ENCODE measurements at regions of chr2 and their contacts with region 1.

Region 1: GRCh38 chr2:16635791-16636699 is 29.6 kb downstream of the CYRIA start:
- DNase-seq: peak; percentile 66
- H3K4me3 ChIP-seq: no peak overlapping the region; a peak in 1 of 4 replicates
- H3K27ac ChIP-seq: no peak overlapping the region
- H3K4me1 ChIP-seq: peaks cover 13 to 25% of the 10 kb centered on the region in 2 experiments; a peak in 2 of 4 replicates
- H3K27me3 ChIP-seq: no peaks in the 10 kb centered on the region
- CTCF ChIP-seq: no peak
- EP300 ChIP-seq: no peak
- RAD21 ChIP-seq: no peak

Region 2: DNA sequence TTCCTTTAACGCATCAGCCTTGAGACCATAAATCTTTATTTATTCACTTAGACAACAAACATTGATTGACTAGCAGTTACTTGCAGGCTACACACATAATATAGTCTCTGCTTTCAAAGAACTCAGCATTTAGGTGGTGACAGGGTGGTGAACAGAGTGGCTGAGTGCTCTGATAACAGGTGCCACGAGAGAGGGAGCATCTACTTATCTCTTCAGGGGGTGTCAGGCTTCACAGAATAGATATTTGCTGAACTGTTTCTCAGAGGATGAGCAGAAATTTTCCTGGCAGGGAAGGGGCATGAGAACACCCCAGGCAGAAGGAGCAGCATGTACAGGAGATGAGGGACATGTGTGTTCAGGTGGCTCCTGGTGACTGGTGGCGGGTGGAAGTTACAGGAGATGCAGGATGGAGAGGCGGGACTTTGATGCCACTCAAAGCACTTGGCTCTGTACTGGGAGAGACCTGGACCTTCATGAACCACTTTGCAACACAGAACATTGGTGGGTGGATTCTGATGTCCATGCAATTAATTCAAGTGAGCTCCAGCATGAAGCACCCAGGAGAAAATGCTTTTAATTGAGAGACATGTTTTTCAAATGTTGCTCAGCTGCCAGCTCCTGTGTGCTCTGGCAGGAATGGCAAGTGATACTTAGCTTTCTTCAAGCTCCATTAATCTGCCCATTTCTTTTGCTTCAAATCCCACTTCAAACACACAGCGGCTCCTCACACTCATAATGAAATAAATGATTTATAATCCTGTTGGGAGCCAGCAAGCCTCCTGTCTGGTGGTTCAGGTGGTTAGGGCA is 446.8 kb before region 1 on chr2:
- CTCF ChIA-PET with region 1: no interaction called
- POLR2A ChIA-PET with region 1: no interaction called
- DNase-seq: no peak
- H3K4me3 ChIP-seq: no peak overlapping the region
- H3K27ac ChIP-seq: no peak overlapping the region
- H3K4me1 ChIP-seq: peaks cover 0 to 30% of the 10 kb centered on the region in 2 experiments; a peak in 1 of 4 replicates
- H3K27me3 ChIP-seq: no peaks in the 10 kb centered on the region
- CTCF ChIP-seq: no peak
- EP300 ChIP-seq: no peak
- RAD21 ChIP-seq: no peak

Region 3: DNA sequence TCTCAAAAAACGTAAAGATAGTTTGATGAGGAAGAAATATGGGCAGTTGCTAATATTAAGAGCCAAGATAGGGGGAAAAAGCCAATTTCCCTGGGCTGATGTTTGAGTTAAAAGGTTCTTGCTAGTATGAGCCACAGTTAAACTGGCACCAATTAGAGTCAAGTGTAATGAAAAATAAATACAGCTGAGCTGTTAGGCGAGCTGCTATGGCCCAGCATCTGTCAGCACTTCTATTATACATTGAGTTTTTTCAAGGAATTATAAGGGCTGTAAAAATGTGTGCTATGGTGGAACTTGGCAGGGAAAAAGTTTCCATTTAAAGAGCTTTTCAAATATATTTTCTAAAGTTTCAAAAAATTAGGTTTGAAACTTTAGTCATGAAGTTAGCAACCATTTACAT is 250.0 kb before region 1 on chr2:
- CTCF ChIA-PET with region 1: no interaction called
- POLR2A ChIA-PET with region 1: no interaction called
- DNase-seq: no peak
- H3K4me3 ChIP-seq: no peak overlapping the region
- H3K27ac ChIP-seq: no peak overlapping the region
- H3K4me1 ChIP-seq: peaks cover 0 to 5% of the 10 kb centered on the region in 2 experiments; a peak in 1 of 4 replicates
- H3K27me3 ChIP-seq: no peaks in the 10 kb centered on the region
- CTCF ChIP-seq: no peak
- EP300 ChIP-seq: no peak
- RAD21 ChIP-seq: no peak

Region 4: GRCh38 chr2:16429431-16430145 is 206.5 kb before region 1 on chr2:
- CTCF ChIA-PET with region 1: no interaction called
- POLR2A ChIA-PET with region 1: no interaction called
- DNase-seq: no peak
- H3K4me3 ChIP-seq: no peak overlapping the region
- H3K27ac ChIP-seq: no peak overlapping the region
- H3K4me1 ChIP-seq: peaks cover 0 to 5% of the 10 kb centered on the region in 2 experiments; a peak in 1 of 4 replicates
- H3K27me3 ChIP-seq: no peaks in the 10 kb centered on the region
- CTCF ChIP-seq: no peak
- EP300 ChIP-seq: no peak
- RAD21 ChIP-seq: no peak

Region 5: GRCh38 chr2:16617282-16618261 is 18.5 kb before region 1 on chr2:
- CTCF ChIA-PET with region 1: interaction called, 43 read pairs
- POLR2A ChIA-PET with region 1: no interaction called
- DNase-seq: peak; percentile 56
- H3K4me3 ChIP-seq: no peak overlapping the region
- H3K27ac ChIP-seq: no peak overlapping the region
- H3K4me1 ChIP-seq: peaks cover 0 to 6% of the 10 kb centered on the region in 2 experiments; a peak in 2 of 4 replicates
- H3K27me3 ChIP-seq: no peaks in the 10 kb centered on the region; the same call in 1 of the 2 replicates
- CTCF ChIP-seq: peak; percentile 59
- EP300 ChIP-seq: no peak
- RAD21 ChIP-seq: peak; percentile 69

Region 6: DNA sequence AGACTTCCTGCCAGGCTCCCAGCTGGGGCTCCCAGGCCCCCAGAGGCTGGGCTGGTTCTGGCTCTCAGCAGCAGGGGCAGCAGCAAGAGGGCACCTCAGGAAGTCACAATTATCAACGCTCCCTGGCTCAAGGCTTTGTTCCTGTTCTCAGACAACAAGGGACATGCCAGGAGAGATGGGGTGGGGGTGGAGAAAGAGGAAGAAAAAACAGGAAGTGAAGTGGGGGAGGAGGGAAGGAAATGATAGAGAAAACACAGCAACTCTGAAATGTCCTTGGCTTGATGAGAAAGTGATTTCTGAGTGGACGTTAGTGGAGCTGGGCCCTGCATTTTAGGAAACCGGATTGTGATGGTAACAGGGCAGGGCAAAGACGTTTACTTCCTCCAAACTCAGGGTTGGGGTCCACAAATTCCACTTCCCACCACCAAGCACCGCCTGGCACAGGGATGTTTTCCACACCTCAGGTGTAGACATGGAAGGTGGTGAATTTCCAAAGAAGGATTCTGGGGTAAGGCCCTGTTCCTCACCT is 10.8 kb before region 1 on chr2:
- CTCF ChIA-PET with region 1: interaction called, 43 read pairs
- POLR2A ChIA-PET with region 1: no interaction called
- DNase-seq: no peak
- H3K4me3 ChIP-seq: no peak overlapping the region
- H3K27ac ChIP-seq: no peak overlapping the region
- H3K4me1 ChIP-seq: peaks cover 4 to 9% of the 10 kb centered on the region in 2 experiments; a peak in 2 of 4 replicates
- H3K27me3 ChIP-seq: no peaks in the 10 kb centered on the region
- CTCF ChIP-seq: no peak
- EP300 ChIP-seq: no peak
- RAD21 ChIP-seq: no peak

Region 7: DNA sequence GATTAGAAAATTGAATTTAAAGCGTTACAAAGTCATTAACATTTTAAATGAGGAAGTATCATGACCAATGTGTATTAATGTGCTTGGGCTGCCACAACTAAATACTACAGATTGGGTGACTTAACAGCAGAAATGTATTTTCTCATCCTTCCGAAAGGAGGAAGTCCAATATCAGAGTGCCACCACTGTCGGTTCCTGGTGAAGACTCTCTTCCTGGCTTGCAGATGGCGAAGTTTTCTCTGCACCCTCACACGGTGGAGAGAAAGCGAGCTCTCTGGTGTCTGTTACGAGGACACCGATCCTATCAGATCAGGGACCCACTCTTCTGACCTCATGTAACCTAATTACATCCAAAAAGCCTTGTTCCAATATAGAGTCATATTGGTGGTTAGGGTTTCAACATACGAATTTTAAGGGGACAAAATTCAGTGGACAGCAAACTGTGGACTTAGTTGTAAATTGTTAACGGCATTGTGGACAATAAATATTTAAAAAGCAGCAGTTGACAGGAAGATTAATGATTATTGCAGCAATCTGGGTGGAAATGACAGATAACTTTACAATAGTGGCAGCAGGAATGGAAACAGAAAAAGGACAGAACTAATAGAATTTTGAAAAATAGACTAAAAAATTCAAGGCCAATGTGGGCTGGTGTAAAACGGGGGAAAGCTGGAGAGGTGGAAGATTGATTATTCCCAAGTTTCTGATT is 64.7 kb after region 1 on chr2:
- CTCF ChIA-PET with region 1: no interaction called
- POLR2A ChIA-PET with region 1: no interaction called
- DNase-seq: no peak
- H3K4me3 ChIP-seq: no peak overlapping the region
- H3K27ac ChIP-seq: no peak overlapping the region
- H3K4me1 ChIP-seq: no peaks in the 10 kb centered on the region
- H3K27me3 ChIP-seq: no peaks in the 10 kb centered on the region
- CTCF ChIP-seq: no peak
- EP300 ChIP-seq: no peak
- RAD21 ChIP-seq: no peak